Activated naive CD4-positive, alpha-beta T cell treated with anti-CD3 and anti-CD28 coated beads for 36 hours (primary cell): ENCODE measurements at regions of chr14 and their contacts with region 1.

Region 1: GRCh38 chr14:60331201-60332045 is 82.4 kb downstream of the PPM1A start:
- DNase-seq: peak; percentile 91
- H3K4me3 Mint-ChIP-seq: peak overlapping the region; percentile 83
- H3K27ac Mint-ChIP-seq: peak overlapping the region; percentile 89
- H3K4me1 Mint-ChIP-seq: peaks cover 32% of the 10 kb centered on the region
- H3K27me3 Mint-ChIP-seq: peaks cover 17% of the 10 kb centered on the region

Region 2: DNA sequence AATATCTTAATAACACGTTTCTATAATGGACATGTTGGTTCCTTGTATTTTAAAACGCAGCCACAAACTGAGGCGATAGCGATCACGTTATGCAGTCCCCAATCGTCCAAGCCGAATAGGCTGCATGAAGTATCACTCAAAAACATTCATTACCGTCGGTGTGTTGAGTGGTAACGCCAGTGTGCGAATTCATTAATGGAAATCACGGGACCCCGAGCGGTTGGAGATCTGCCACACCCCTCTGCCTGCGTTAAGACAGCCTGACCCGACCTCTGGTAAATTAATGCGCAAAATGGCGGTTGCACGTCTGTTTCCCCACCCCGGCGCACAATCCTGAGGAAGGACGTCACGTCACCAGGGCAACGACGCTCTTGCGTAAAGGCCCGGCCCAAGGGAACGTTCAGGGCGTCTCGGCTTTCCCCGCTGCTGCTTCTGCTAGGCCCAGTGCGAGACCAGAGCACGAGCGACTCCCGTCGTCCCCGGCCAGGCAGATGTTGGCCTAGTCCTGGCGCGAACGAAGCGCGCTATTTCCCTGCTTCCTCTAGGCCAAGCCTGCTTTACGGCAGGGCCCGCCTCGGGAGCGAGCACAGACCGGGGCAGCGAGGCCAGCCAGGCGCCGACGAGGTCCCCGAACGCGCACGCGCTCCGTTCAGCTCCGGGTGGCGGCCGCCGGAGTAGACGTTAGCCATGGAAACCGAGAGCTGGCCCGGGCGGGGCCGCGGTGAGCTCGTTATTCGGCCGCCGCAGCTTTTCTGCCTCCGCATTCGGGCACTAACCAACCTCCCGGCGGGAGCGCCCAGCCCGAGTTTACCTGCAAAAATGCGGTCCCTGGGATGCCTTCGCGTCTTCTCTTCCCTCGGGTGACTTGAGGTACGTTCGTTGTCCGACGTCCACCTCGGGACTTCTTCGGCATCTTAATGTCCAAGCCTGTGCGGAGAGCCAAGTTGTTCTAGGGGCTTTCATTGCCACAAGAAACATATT is 239.6 kb before region 1 on chr14 and contains the start of gene PCNX4:
- CTCF ChIA-PET with region 1: no interaction called
- intact Hi-C with region 1: loop called (anchors 1 kb)
- DNase-seq: peak; percentile 95
- H3K4me3 Mint-ChIP-seq: peak within 1 kb of the TSS; percentile 98
- H3K27ac Mint-ChIP-seq: peak within 1 kb of the TSS; percentile 95
- H3K4me1 Mint-ChIP-seq: peaks cover 34% of the 10 kb centered on the region
- H3K27me3 Mint-ChIP-seq: peaks cover 9% of the 10 kb centered on the region
- total RNA-seq, gene PCNX4: 24.9 to 27.5 TPM

Region 3: GRCh38 chr14:60349663-60350365 is 18.4 kb after region 1 on chr14:
- CTCF ChIA-PET with region 1: interaction called, 43 read pairs
- intact Hi-C with region 1: no loop called
- DNase-seq: peak; percentile 51
- H3K4me3 Mint-ChIP-seq: no peak overlapping the region
- H3K27ac Mint-ChIP-seq: no peak overlapping the region
- H3K4me1 Mint-ChIP-seq: no peaks in the 10 kb centered on the region
- H3K27me3 Mint-ChIP-seq: peaks cover 3% of the 10 kb centered on the region

Region 4: DNA sequence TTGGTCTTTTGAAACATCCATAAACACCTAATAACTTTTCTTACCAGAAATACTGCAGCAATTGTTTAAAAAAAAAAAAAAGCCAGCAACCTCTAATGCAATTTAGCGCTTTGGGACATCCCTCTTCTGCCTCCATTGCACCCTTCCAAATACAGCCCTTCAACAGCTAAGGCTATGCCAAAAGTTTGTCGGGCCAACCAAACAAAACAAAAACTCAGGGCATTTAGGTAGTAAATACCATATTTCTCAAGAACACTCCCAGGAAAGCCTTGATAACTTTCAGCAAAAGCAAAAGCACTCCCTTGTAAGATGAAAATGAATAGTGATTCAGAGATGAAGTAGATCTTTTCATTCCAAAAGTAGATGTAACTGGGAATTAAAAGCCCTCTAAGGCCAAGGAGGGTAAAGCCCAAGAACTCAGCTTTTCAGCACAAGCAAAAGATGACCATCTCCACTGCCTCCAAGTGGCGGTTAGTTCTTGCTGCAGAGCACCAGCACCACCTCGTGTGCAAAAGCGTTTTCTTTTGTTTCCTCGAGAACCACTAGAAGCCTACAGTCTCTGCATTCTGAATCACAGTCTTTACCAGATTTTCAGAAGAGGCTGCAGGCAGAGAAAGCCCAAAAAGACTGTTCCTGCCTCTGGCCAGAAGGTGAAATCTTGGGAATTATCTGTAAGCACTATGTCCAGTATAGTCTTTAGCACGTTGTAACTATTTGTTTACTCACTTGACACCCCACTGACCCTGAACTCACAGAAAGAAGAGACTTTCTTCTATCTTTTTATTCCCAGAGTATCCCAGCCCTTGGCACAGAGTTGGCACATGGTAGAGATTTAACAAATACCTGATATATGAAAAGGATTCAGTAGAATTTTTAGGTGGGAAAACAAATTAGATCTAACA is 230.7 kb after region 1 on chr14:
- CTCF ChIA-PET with region 1: interaction called, 5 read pairs
- intact Hi-C with region 1: loop called (anchors 1 kb)
- DNase-seq: peak; percentile 59
- H3K4me3 Mint-ChIP-seq: no peak overlapping the region
- H3K27ac Mint-ChIP-seq: no peak overlapping the region
- H3K4me1 Mint-ChIP-seq: no peaks in the 10 kb centered on the region
- H3K27me3 Mint-ChIP-seq: no peaks in the 10 kb centered on the region

Region 5: GRCh38 chr14:61252369-61253063 is 921.1 kb after region 1 on chr14:
- CTCF ChIA-PET with region 1: no interaction called
- intact Hi-C with region 1: loop called (anchors 5 kb)
- DNase-seq: peak; percentile 83
- H3K4me3 Mint-ChIP-seq: no peak overlapping the region
- H3K27ac Mint-ChIP-seq: no peak overlapping the region
- H3K4me1 Mint-ChIP-seq: no peaks in the 10 kb centered on the region
- H3K27me3 Mint-ChIP-seq: peaks cover 7% of the 10 kb centered on the region